Posterior vena cava (tissue), 2 donors: ENCODE measurements at regions of chr18 and their contacts with region 1.

Region 1: GRCh38 chr18:32036506-32037180 is 18.0 kb downstream of the RNF125 start:
- DNase-seq: no peak

Region 2: DNA sequence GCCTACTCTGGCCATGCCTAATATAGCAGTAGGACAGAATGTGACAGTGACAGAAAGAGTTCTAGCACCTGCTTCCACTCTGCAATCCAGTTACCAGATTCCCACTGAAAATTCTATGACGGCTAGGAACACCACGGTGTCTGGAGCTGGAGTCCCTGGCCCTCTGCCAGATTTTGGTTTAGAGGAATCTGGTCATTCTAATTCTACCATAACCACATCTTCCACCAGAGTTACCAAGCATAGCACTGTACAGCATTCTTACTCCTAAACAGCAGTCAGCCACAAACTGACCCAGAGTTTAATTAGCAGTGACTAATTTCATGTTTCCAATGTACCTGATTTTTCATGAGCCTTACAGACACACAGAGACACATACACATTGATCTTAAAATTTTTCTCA is 490.2 kb before region 1 on chr18:
- intact Hi-C with region 1: no loop called
- DNase-seq: no peak

Region 3: GRCh38 chr18:31977270-31977872 is 59.3 kb before region 1 on chr18:
- intact Hi-C with region 1: loop called in 1 of 2 experiments (anchors 10 kb)
- DNase-seq: no peak